ENCODE measurements at regions of chr12 and their contacts with region 1.

Region 1: GRCh38 chr12:119695034-119695433 is 27.1 kb downstream of the PRKAB1 start:
- ATAC-seq: no peak
- H3K4me3 ChIP-seq: no peak overlapping the region
- H3K27ac ChIP-seq: no peak overlapping the region
- H3K4me1 ChIP-seq: no peaks in the 10 kb centered on the region

Region 2: GRCh38 chr12:119902084-119902509 is 207.1 kb after region 1 on chr12:
- in situ Hi-C with region 1: loop called in 1 of 9 experiments (anchors 25 kb)
- ATAC-seq: peak; percentile 30 to 98 (median 60)
- H3K4me3 ChIP-seq: no peak overlapping the region
- H3K27ac ChIP-seq: no peak overlapping the region
- H3K4me1 ChIP-seq: no peaks in the 10 kb centered on the region

Region 3: DNA sequence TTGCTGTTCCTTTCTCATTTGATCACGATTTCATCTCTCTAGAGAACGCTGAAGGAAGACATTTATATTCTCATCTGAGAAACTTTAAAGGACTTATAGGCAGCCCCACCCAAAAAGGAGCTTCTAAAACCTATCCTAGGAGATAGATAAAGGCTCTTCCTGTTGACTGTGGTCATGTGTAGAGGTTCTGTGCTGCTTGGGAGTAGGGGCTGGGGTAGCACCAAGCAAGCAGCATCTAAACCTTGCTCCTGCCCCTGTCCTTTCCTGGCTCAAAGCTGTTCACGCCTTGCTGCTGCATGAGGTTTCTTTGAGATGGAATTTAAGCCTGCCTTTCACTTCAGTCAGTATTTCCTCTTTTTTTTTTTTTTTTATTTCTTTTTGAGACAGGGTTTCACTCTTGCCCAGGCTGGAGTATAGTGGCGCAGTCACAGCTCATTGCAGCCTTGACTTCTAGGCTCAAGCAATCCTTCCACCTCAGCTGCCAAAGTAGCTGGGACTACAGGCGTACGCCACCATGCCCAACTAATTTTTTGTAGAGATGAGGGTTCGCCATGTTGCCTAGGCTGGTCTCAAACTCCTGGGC is 380.1 kb after region 1 on chr12:
- in situ Hi-C with region 1: no loop called
- ATAC-seq: no peak
- H3K4me3 ChIP-seq: no peak overlapping the region
- H3K27ac ChIP-seq: no peak overlapping the region
- H3K4me1 ChIP-seq: no peaks in the 10 kb centered on the region